Activated naive CD4-positive, alpha-beta T cell treated with anti-CD3 and anti-CD28 coated beads, Interleukin-2, amount 10 ng/mL, durations not matched to agents 7 days and 5 days (primary cell): ENCODE measurements at regions of chr6 and their contacts with region 1.

Region 1: DNA sequence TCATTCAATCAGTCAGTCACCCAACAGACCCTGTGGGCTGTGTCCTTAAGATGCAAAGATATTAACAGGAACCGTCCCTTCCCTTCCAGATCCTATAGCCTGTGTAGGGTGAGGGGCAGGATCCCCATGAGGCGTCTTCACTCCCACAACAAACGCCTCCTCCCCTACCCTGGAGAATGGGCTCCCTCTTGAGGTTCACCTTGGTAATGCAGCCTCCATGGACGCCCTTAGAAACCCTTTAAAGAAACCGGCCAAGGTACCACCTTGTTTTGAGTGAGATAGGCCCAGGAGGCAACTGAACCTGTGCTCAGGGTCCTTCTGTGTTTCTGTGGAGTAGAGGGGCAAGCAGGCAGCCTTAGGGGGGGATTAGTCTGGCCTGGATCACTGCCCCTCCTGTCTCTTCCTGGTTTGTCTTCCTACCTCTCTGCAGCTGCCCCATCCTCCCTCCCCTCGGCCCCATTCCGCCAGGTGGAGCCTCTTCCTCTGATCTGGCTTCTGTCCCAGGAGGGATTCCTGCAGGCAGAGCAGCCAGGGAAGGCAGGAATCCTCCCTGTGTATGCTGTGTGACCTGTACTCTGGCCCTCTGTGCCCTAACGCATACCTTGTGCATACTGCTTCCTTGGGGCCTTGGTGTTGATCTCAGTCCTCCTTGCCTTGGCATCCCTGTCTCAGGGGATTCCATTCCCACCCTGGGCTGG is 6.6 kb upstream of the GUCA1A start:
- DNase-seq: peak; percentile 87
- H3K4me3 Mint-ChIP-seq: no peak overlapping the region
- H3K27ac Mint-ChIP-seq: no peak overlapping the region
- H3K4me1 Mint-ChIP-seq: peaks cover 4% of the 10 kb centered on the region
- H3K27me3 Mint-ChIP-seq: peaks cover 40% of the 10 kb centered on the region

Region 2: GRCh38 chr6:41639612-41640371 is 526.8 kb before region 1 on chr6:
- CTCF ChIA-PET with region 1: no interaction called
- DNase-seq: no peak
- H3K4me3 Mint-ChIP-seq: no peak overlapping the region
- H3K27ac Mint-ChIP-seq: no peak overlapping the region
- H3K4me1 Mint-ChIP-seq: peaks cover 6% of the 10 kb centered on the region
- H3K27me3 Mint-ChIP-seq: peaks cover 100% of the 10 kb centered on the region

Region 3: GRCh38 chr6:42075159-42075838 is 91.3 kb before region 1 on chr6:
- CTCF ChIA-PET with region 1: interaction called, 18 read pairs
- DNase-seq: peak; percentile 71
- H3K4me3 Mint-ChIP-seq: no peak overlapping the region
- H3K27ac Mint-ChIP-seq: no peak overlapping the region
- H3K4me1 Mint-ChIP-seq: no peaks in the 10 kb centered on the region
- H3K27me3 Mint-ChIP-seq: no peaks in the 10 kb centered on the region

Region 4: GRCh38 chr6:42390228-42390934 is 223.8 kb after region 1 on chr6:
- CTCF ChIA-PET with region 1: no interaction called
- DNase-seq: peak; percentile 71
- H3K4me3 Mint-ChIP-seq: peak overlapping the region; percentile 58
- H3K27ac Mint-ChIP-seq: peak overlapping the region; percentile 99
- H3K4me1 Mint-ChIP-seq: peaks cover 89% of the 10 kb centered on the region
- H3K27me3 Mint-ChIP-seq: no peaks in the 10 kb centered on the region